ENCODE measurements at regions of chr1 and their contacts with region 1.

Region 1: DNA sequence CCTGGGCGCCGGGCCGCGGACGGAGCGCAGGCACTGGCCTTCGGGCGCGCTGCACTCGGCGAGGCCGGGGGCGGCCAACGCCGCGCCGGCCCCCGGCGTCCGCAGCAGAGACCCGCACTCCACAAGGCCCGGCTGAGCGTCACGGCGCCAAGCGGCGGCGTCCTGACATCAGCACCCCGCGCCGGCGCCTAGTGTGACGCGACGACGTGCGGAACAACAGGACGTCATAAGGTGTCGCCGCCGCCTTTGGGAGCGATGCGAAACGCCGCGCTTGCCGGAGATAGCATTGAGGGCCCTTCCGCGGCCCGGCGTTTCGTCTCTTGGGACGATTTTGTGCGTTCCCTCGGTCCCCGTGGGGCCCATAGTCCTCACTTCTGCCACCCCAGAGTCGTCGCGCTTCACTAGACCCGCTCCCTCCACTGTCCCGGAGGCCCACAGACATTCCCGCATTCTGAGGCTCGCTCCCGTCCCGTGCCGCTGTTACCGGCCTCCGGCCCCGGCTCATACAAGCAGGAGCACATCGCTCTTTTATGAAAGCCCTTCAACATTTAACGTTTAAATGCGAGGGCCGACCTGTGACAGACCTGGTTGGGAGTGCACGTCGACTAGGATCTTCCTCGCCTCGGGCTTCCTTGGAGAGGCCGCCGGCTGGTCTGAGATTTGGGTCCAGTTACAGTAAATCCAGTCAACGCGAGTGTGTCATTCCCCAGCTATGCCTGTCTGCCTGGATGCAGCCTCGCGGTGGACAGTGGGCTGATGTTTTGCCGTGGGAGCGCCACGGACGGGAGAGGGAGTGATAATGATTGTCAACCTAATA is at the start of gene SSU72:
- DNase-seq: peak; percentile 93
- H3K4me3 Mint-ChIP-seq: peak within 1 kb of the TSS; percentile 75
- H3K27ac Mint-ChIP-seq: peak within 1 kb of the TSS; percentile 99
- H3K4me1 Mint-ChIP-seq: peaks cover 2% of the 10 kb centered on the region
- H3K27me3 Mint-ChIP-seq: no peaks in the 10 kb centered on the region
- CTCF ChIP-seq: no peak
- total RNA-seq, gene SSU72: 97.4 and 104 TPM in 2 replicates

Region 2: GRCh38 chr1:1615256-1616044 is 40.5 kb after region 1 on chr1 and contains the start of gene MIB2:
- CTCF ChIA-PET with region 1: interaction called, 3 read pairs
- POLR2A ChIA-PET with region 1: interaction called, 29 read pairs
- intact Hi-C with region 1: loop called (anchors 2 kb)
- DNase-seq: peak; percentile 94
- H3K4me3 Mint-ChIP-seq: peak within 1 kb of the TSS; percentile 94
- H3K27ac Mint-ChIP-seq: peak within 1 kb of the TSS; percentile 95
- H3K4me1 Mint-ChIP-seq: peaks cover 15% of the 10 kb centered on the region
- H3K27me3 Mint-ChIP-seq: no peaks in the 10 kb centered on the region
- CTCF ChIP-seq: no peak
- total RNA-seq, gene MIB2: 46.4 and 61.3 TPM in 2 replicates

Region 3: DNA sequence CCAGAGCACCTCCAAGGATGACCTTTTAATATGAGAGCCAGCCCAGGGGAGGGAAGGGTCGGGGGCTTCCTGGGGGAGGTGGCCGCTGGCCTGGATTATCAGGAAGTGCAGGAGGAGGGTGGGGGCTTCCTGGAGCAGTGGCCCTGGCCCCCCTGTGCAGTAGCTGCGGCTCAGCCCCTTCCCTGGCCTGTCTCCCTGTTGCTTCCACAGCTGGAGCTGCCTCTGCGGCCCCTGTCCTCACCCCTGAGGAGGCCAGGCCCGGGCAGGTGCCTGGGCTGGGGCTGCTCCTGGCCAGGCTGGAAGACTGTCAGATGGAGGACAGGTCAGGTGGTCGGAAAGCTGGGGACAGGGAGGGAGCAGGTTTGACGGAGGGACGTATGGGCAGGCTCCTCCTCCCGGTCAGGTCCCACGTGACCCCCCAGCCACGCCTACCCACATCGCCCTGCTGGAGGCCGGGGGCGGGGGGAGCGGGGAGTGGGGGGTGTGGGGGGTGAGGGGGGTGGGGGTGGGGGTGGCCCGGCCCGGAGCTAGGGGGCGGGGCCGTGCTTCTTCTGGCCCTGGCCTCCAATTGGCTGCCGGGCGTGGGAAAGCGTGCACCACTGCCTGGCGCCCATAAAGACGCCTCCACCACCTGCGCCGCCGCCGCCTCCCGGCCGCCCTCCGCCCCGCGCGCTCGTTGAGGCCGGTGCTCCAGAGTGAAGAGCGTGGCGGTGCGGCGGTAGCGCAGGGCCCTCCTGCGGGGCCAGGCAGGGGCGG is 971.0 kb after region 1 on chr1:
- CTCF ChIA-PET with region 1: no interaction called
- POLR2A ChIA-PET with region 1: no interaction called
- intact Hi-C with region 1: no loop called
- DNase-seq: peak; percentile 78
- H3K4me3 Mint-ChIP-seq: peak overlapping the region; percentile 75
- H3K27ac Mint-ChIP-seq: no peak overlapping the region
- H3K4me1 Mint-ChIP-seq: peaks cover 5% of the 10 kb centered on the region
- H3K27me3 Mint-ChIP-seq: no peaks in the 10 kb centered on the region
- CTCF ChIP-seq: no peak